PC-9 (cell line): ENCODE measurements at regions of chr11 and their contacts with region 1.

Region 1: GRCh38 chr11:8688414-8689362 is 6.1 kb downstream of the RPL27A start:
- DNase-seq: peak; percentile 90
- H3K4me3 ChIP-seq: peak overlapping the region; percentile 69
- H3K27ac ChIP-seq: peak overlapping the region; percentile 73
- H3K4me1 ChIP-seq: peaks cover 45% of the 10 kb centered on the region
- H3K27me3 ChIP-seq: no peaks in the 10 kb centered on the region
- CTCF ChIP-seq: peak; percentile 24; the same call in 1 of the 2 replicates

Region 2: DNA sequence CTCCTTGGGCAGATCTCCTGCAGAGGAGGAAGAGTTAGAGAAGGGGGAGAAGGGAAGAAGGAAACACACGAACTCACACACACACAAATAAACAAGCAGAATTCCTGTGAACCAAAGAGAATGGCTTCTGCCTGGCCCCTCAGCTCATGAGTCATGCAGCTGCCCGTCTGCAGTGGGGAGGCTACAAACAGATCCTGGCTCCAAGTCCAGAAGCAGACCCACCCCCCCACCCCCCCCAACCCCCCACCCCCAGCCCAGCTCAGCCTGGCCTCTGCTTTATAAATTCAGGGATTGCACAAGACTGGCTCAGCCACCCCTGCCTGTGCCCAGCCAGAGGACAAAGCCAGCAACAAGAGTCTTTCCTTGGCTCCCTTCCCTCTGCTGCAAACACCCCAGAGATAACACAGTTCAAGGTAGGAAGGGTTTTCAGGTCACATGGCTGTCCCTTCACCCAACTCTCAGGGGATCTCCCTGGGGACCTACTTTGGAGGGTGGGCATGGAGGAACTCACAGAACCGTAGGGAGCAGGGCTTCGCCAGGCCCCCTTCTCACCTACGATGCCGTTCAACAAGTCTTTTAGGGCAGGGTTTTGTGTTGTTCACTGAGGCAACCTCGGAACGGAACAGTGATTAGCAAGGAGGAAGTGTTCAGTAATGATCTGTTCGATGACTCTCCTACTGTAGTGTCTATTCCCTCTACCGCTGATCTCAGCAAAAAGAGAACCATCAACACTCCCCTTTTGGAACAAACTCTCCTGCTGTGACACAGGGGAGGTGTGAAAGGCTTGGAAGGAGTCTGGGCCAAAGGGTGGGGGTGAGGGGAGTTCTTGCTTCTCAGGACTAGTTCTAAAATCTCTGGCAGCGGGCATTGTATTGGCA is 29.4 kb after region 1 on chr11:
- CTCF ChIA-PET with region 1: interaction called, 3 read pairs
- POLR2A ChIA-PET with region 1: interaction called, 6 read pairs
- intact Hi-C with region 1: loop called (anchors 2 kb)
- DNase-seq: peak; percentile 57 to 70
- H3K4me3 ChIP-seq: peak overlapping the region; percentile 45; the same call in 1 of the 2 replicates
- H3K27ac ChIP-seq: peak overlapping the region; percentile 96
- H3K4me1 ChIP-seq: peaks cover 66% of the 10 kb centered on the region
- H3K27me3 ChIP-seq: no peaks in the 10 kb centered on the region
- CTCF ChIP-seq: no peak

Region 3: GRCh38 chr11:8813658-8814057 is 125.0 kb after region 1 on chr11:
- CTCF ChIA-PET with region 1: no interaction called
- POLR2A ChIA-PET with region 1: no interaction called
- intact Hi-C with region 1: loop called (anchors 2 kb)
- DNase-seq: peak; percentile 49 to 63
- H3K4me3 ChIP-seq: no peak overlapping the region
- H3K27ac ChIP-seq: peak overlapping the region; percentile 81
- H3K4me1 ChIP-seq: peaks cover 41% of the 10 kb centered on the region
- H3K27me3 ChIP-seq: no peaks in the 10 kb centered on the region
- CTCF ChIP-seq: peak; percentile 78

Region 4: GRCh38 chr11:8911029-8911826 is 222.5 kb after region 1 on chr11 and contains the start of gene AKIP1:
- CTCF ChIA-PET with region 1: no interaction called
- POLR2A ChIA-PET with region 1: no interaction called
- intact Hi-C with region 1: loop called (anchors 2 kb)
- DNase-seq: peak; percentile 64 to 86
- H3K4me3 ChIP-seq: peak within 1 kb of the TSS; percentile 88
- H3K27ac ChIP-seq: no peak within 1 kb of the TSS
- H3K4me1 ChIP-seq: peaks cover 18% of the 10 kb centered on the region
- H3K27me3 ChIP-seq: no peaks in the 10 kb centered on the region
- CTCF ChIP-seq: no peak
- total RNA-seq, gene AKIP1: 16.7 and 17.7 TPM in 2 replicates

Region 5: GRCh38 chr11:9384535-9385303 is 696.0 kb after region 1 on chr11 and contains the start of gene IPO7:
- CTCF ChIA-PET with region 1: no interaction called
- POLR2A ChIA-PET with region 1: interaction called, 10 read pairs
- intact Hi-C with region 1: no loop called
- DNase-seq: peak; percentile 74 to 75
- H3K4me3 ChIP-seq: peak within 1 kb of the TSS; percentile 81
- H3K27ac ChIP-seq: peak within 1 kb of the TSS; percentile 79
- H3K4me1 ChIP-seq: peaks cover 21% of the 10 kb centered on the region
- H3K27me3 ChIP-seq: no peaks in the 10 kb centered on the region
- CTCF ChIP-seq: no peak
- total RNA-seq, gene IPO7: 83.7 and 126 TPM in 2 replicates